ENCODE measurements at regions of chr18 and their contacts with region 1.

Region 1: DNA sequence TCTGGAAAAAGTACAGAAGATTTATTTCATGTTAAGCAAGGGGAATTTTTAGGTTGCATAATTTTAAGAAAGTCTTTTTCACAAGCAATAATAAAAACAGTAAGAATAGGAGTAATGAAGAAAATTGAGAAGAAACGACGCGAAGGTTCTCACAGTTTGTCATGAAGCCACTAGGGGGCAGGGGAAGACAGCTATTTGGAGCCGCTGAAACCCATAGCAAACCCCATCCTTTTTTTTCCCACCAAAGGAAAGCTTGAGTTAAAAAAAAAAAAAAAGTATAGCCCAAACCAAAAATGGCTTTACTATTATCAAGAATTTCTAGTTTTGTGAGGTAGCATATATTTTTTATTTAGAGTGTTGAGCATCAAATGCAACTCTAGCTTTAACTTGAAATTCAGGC is 300.9 kb downstream of the PHLPP1 start:
- DNase-seq: peak; percentile 84
- H3K4me3 ChIP-seq: no peak overlapping the region
- H3K27ac ChIP-seq: no peak overlapping the region
- H3K4me1 ChIP-seq: no peaks in the 10 kb centered on the region
- H3K27me3 ChIP-seq: no peaks in the 10 kb centered on the region
- CTCF ChIP-seq: peak; percentile 82

Region 2: DNA sequence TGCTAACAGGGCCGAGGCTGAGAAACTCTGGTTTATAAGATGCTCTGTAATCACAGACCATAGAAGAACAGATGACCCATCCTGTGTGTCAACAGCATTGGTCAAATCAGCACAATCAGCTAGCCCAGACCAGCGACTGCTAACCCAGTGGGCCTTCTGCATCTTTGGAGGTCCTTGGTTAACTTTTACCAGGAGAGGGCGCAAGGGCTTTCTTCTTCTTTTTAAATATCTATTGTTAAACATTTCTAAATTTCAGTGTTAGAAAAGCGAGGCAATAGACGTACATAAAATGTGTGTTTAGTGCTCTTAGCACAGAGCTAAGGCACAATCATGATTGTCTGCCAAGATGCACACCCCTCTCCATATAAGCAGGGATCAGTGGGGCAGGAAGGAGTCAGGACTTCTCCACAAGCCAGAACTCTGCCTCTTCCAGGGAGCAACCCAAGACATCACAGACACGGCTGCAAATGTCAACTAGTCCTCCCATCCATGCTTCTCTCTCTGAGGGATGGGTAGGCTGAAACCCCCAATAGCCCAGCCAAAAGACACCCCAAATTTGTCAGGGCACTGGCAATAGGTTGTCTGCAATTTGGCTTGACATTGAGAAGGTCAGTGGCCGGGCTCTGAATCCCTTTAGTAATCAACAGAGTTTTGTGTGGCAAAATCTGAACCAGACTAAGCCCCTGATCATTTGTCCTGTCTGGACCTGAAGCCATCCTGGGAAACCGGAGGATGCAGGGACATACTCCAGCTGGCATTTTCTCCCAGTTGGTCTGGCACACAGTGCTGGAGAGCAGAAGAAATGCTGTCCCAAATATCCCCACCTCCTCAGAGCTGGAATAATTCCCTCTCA is 115.1 kb after region 1 on chr18:
- CTCF ChIA-PET with region 1: no interaction called
- POLR2A ChIA-PET with region 1: no interaction called
- intact Hi-C with region 1: no loop called
- DNase-seq: peak; percentile 61
- H3K4me3 ChIP-seq: no peak overlapping the region
- H3K27ac ChIP-seq: no peak overlapping the region
- H3K4me1 ChIP-seq: peaks cover 34% of the 10 kb centered on the region
- H3K27me3 ChIP-seq: no peaks in the 10 kb centered on the region
- CTCF ChIP-seq: peak; percentile 73

Region 3: GRCh38 chr18:63155169-63155852 is 139.0 kb after region 1 on chr18:
- CTCF ChIA-PET with region 1: no interaction called
- POLR2A ChIA-PET with region 1: no interaction called
- intact Hi-C with region 1: loop called (anchors 5 kb)
- DNase-seq: peak; percentile 68
- H3K4me3 ChIP-seq: no peak overlapping the region
- H3K27ac ChIP-seq: no peak overlapping the region
- H3K4me1 ChIP-seq: peaks cover 24% of the 10 kb centered on the region
- H3K27me3 ChIP-seq: no peaks in the 10 kb centered on the region
- CTCF ChIP-seq: peak; percentile 91

Region 4: DNA sequence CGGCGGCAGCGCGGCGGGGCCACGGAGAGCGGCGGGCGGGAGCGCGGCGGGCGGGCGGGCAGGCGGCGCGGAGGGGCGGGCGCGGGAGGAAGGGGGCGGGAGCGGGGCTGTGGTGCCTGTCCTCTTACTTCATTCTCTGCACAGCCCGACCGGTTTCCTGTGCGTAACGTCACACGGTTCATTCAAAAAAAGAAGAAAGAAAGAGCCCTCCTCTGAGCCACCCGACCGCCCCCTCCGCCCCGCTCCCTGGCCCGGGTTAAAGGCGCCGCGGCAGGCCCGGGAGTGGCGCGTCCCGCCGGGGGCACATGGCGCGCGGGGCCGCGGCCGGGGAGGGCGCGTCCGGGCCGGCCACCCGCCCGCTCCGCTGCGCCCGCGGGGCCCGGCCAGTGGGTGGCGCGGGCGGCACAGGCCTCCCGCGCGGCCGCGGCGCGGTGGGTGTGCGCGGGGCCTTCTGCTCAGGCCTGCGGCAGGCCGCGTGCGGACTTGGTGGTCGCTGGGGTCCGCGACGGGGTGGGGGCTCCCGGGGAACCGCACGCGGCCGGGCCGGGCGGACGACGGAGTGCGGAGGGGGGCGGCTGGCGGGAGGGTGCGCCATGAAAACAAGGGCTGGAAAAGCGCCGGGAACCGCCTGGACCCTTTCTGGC is 303.9 kb after region 1 on chr18:
- CTCF ChIA-PET with region 1: interaction called, 15 read pairs
- POLR2A ChIA-PET with region 1: no interaction called
- intact Hi-C with region 1: loop called (anchors 2 kb)
- DNase-seq: peak; percentile 92
- H3K4me3 ChIP-seq: peak overlapping the region; percentile 74
- H3K27ac ChIP-seq: peak overlapping the region; percentile 89
- H3K4me1 ChIP-seq: peaks cover 30% of the 10 kb centered on the region
- H3K27me3 ChIP-seq: no peaks in the 10 kb centered on the region
- CTCF ChIP-seq: no peak

Region 5: GRCh38 chr18:63505566-63506335 is 489.5 kb after region 1 on chr18:
- CTCF ChIA-PET with region 1: interaction called, 3 read pairs
- POLR2A ChIA-PET with region 1: no interaction called
- intact Hi-C with region 1: loop called (anchors 5 kb)
- DNase-seq: peak; percentile 79
- H3K4me3 ChIP-seq: no peak overlapping the region
- H3K27ac ChIP-seq: peak overlapping the region; percentile 31
- H3K4me1 ChIP-seq: peaks cover 18% of the 10 kb centered on the region
- H3K27me3 ChIP-seq: no peaks in the 10 kb centered on the region
- CTCF ChIP-seq: peak; percentile 83

Region 6: GRCh38 chr18:63578357-63578958 is 562.2 kb after region 1 on chr18:
- CTCF ChIA-PET with region 1: interaction called, 6 read pairs
- POLR2A ChIA-PET with region 1: no interaction called
- intact Hi-C with region 1: loop called (anchors 10 kb)
- DNase-seq: peak; percentile 79
- H3K4me3 ChIP-seq: no peak overlapping the region
- H3K27ac ChIP-seq: no peak overlapping the region
- H3K4me1 ChIP-seq: peaks cover 25% of the 10 kb centered on the region
- H3K27me3 ChIP-seq: no peaks in the 10 kb centered on the region
- CTCF ChIP-seq: peak; percentile 89

Measured in A673 (cell line).